ENCODE measurements at regions of chr6 and their contacts with region 1.

Region 1: GRCh38 chr6:82080767-82081166 is 166.8 kb downstream of the IBTK start:
- DNase-seq: no peak
- ATAC-seq: no peak
- H3K4me3 ChIP-seq: no peak overlapping the region
- H3K27ac ChIP-seq: no peak overlapping the region
- H3K4me1 ChIP-seq: peaks cover 61% of the 10 kb centered on the region
- H3K27me3 ChIP-seq: no peaks in the 10 kb centered on the region
- CTCF ChIP-seq: no peak
- EP300 ChIP-seq: no peak
- POLR2A ChIP-seq: no peak
- RAD21 ChIP-seq: no peak

Region 2: DNA sequence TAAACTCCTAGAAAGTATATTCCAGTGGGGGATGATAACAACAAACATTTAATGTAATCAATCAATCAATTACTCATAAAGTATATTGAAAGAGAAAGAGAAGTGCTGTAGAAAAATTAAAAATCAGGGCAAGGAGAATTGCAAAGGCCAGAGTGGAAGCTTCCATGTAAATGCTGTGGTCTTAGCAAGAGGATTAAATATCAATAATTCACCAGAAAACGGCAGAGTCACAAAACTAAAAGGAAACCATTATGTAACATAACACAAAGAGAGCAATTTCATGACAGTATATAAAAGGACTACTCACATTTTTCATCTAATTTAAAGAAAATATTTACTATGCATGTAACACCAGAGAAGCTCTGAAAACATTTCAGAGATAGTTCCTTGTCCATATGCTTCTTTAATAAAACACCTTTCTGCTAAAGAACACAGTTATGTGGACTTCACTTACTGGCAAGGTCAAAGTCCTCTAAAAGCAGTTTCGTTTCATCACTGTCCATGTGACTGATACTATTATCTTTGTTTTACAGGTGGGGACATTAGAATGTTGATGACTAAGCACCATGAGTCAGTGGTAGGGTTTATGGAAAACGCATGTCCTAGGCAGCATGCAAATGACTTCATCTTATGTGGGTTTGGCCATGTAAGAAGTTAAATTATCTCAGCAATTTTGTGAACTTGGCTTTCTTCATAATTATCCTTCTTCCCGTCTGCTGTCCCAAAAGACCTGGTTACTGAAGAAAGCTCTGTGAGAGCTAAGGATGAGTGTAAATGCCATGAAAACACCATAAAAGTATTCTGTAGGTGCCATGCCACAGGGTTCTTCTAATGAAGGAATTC is 142.5 kb before region 1 on chr6:
- CTCF ChIA-PET with region 1: no interaction called
- POLR2A ChIA-PET with region 1: no interaction called
- in situ Hi-C with region 1: no loop called
- intact Hi-C with region 1: loop called (anchors 2 kb)
- DNase-seq: peak; percentile 93
- ATAC-seq: peak; percentile 91
- H3K4me3 ChIP-seq: peak overlapping the region; percentile 11 to 43 (median 37); a peak in 4 of 6 replicates
- H3K27ac ChIP-seq: peak overlapping the region; percentile 64
- H3K4me1 ChIP-seq: peaks cover 65% of the 10 kb centered on the region
- H3K27me3 ChIP-seq: no peaks in the 10 kb centered on the region
- CTCF ChIP-seq: no peak
- EP300 ChIP-seq: peak in 1 of 2 experiments; percentile 80; a peak in 2 of 4 replicates
- POLR2A ChIP-seq: no peak
- RAD21 ChIP-seq: no peak

Region 3: DNA sequence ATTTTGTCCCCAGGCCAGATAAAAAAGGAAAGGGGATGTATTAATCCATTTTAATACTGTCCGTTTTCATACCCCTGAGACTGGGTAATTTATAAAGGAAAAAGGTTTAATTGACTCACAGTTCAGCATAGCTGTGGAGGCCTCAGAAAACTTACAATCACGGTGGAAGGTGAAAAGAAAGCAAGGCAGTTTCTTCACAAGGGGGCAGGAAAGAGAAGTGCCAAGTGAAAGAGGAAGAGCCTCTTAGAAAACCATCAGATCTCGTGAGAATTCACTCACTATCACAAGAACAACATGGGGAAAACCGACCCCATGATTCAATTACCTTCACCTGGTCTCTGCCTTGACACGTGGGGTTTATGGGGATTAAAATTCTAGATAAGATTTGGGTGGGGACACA is 14.3 kb after region 1 on chr6:
- CTCF ChIA-PET with region 1: no interaction called
- POLR2A ChIA-PET with region 1: interaction called, 17 read pairs
- in situ Hi-C with region 1: no loop called
- intact Hi-C with region 1: no loop called
- DNase-seq: no peak
- ATAC-seq: no peak
- H3K4me3 ChIP-seq: no peak overlapping the region
- H3K27ac ChIP-seq: peak overlapping the region; percentile 72
- H3K4me1 ChIP-seq: peaks cover 73% of the 10 kb centered on the region
- H3K27me3 ChIP-seq: no peaks in the 10 kb centered on the region
- CTCF ChIP-seq: no peak
- EP300 ChIP-seq: no peak
- POLR2A ChIP-seq: no peak
- RAD21 ChIP-seq: no peak